Transverse colon (tissue), 4 donors: ENCODE measurements at regions of chrX and their contacts with region 1.

Region 1: GRCh38 chrX:14291666-14292500 is 237.5 kb upstream of the GLRA2 start:
- DNase-seq: no peak
- H3K4me3 ChIP-seq: no peak overlapping the region
- H3K27ac ChIP-seq: no peak overlapping the region
- H3K4me1 ChIP-seq: no peaks in the 10 kb centered on the region
- H3K27me3 ChIP-seq: no peaks in the 10 kb centered on the region
- CTCF ChIP-seq: no peak
- EP300 ChIP-seq: no peak
- POLR2A ChIP-seq: no peak

Region 2: GRCh38 chrX:14243823-14244222 is 48.1 kb before region 1 on chrX:
- in situ Hi-C with region 1: no loop called
- intact Hi-C with region 1: loop called (anchors 1 kb)
- DNase-seq: no peak
- H3K4me3 ChIP-seq: no peak overlapping the region
- H3K27ac ChIP-seq: no peak overlapping the region
- H3K4me1 ChIP-seq: no peaks in the 10 kb centered on the region
- H3K27me3 ChIP-seq: no peaks in the 10 kb centered on the region
- CTCF ChIP-seq: no peak
- EP300 ChIP-seq: no peak
- POLR2A ChIP-seq: no peak